Mammary epithelial cell (primary cell): ENCODE measurements at regions of chr9 and their contacts with region 1.

Region 1: DNA sequence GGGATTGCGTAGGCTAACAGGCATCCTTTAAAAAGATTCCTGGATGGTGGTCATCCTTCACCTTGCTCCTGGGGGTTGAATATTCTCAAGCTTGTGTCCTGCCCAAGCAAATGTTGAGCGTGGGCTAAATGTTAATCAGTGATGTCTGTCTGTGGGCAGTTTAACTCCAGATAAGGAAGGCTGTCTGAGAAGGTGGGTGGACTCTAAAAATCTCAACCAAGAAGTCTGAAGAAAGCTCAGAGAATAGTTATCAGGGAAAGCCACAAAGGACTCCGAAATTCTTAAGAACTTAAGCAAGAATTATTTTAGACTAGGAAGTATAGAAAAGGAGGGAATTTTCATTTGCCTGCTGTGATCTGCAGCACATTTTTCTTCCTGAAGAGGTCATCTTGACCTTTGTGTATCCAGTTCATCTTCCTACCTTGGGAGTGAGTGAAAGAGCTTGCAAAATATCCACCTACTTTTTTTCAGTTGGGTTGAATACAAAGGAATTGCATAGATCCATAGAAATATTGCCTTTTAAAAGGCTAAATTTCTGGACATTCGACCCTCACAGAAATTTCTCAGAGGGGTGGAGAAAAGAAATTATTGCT is 77.8 kb upstream of the FSD1L start:
- DNase-seq: no peak
- H3K4me3 ChIP-seq: no peak overlapping the region
- H3K27ac ChIP-seq: no peak overlapping the region
- H3K4me1 ChIP-seq: no peaks in the 10 kb centered on the region
- H3K27me3 ChIP-seq: no peaks in the 10 kb centered on the region
- CTCF ChIP-seq: no peak

Region 2: GRCh38 chr9:104934691-104935500 is 435.1 kb before region 1 on chr9:
- CTCF ChIA-PET with region 1: no interaction called
- dilution Hi-C with region 1: no loop called
- in situ Hi-C with region 1: no loop called
- intact Hi-C with region 1: no loop called
- DNase-seq: no peak
- H3K4me3 ChIP-seq: no peak overlapping the region
- H3K27ac ChIP-seq: no peak overlapping the region
- H3K4me1 ChIP-seq: no peaks in the 10 kb centered on the region
- H3K27me3 ChIP-seq: no peaks in the 10 kb centered on the region
- CTCF ChIP-seq: no peak

Region 3: GRCh38 chr9:105341434-105342144 is 28.4 kb before region 1 on chr9:
- CTCF ChIA-PET with region 1: no interaction called
- dilution Hi-C with region 1: no loop called
- in situ Hi-C with region 1: no loop called
- intact Hi-C with region 1: loop called (anchors 1 kb)
- DNase-seq: no peak
- H3K4me3 ChIP-seq: peak overlapping the region in 1 of 3 experiments; percentile 15
- H3K27ac ChIP-seq: no peak overlapping the region
- H3K4me1 ChIP-seq: no peaks in the 10 kb centered on the region
- H3K27me3 ChIP-seq: no peaks in the 10 kb centered on the region
- CTCF ChIP-seq: no peak